Activated CD8-positive, alpha-beta T cell treated with anti-CD3 and anti-CD28 coated beads for 36 hours (primary cell): ENCODE measurements at regions of chr13 and their contacts with region 1.

Region 1: GRCh38 chr13:91722267-91722884 is 324.0 kb downstream of the GPC5 start:
- DNase-seq: no peak
- ATAC-seq: no peak
- H3K4me3 Mint-ChIP-seq: no peak overlapping the region
- H3K27ac Mint-ChIP-seq: no peak overlapping the region
- H3K4me1 Mint-ChIP-seq: no peaks in the 10 kb centered on the region
- H3K27me3 Mint-ChIP-seq: peaks cover 4% of the 10 kb centered on the region
- CTCF ChIP-seq: peak; percentile 72

Region 2: DNA sequence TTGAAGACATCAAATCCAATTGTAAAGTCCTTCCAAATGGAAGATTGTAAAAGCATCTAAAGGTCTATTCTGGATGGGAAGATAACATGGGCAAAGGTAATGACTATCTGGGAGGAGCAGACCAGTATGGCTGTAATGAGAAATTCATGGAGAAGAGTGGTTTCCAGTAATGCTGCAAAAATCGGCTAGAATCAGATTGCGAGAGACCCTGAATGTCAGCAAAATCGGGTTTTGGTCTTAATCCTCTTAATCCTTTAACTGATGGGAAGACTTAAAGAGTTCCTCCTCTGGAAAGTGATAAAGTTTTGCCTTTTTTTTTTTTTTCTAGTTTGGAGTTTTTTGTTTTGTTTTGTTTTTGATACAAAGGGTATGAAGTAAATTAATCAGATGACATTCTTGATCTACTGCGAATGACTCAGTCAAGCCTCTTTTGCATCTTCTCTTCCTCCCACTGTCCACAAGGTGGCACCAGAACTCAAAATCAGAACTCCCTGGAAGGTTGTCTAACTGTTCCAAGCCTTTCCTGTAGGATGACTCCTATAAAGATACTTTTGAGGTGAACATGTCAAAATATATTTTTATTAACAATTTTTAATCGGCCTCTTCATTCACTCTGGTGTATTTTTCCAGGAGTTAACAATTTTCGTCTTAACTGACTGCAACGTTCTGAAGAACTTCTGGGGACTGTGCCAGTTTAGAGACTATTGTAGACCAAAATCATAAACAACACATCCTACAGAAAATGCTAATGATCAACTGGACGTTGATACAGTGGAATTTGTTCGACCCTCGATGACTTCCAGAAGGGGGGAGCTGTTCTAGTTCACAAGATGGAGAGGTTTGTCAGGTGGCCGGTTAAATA is 588.2 kb before region 1 on chr13:
- CTCF ChIA-PET with region 1: interaction called, 3 read pairs
- POLR2A ChIA-PET with region 1: no interaction called
- intact Hi-C with region 1: loop called (anchors 10 kb)
- DNase-seq: peak; percentile 43
- ATAC-seq: peak; percentile 74
- H3K4me3 Mint-ChIP-seq: no peak overlapping the region
- H3K27ac Mint-ChIP-seq: no peak overlapping the region
- H3K4me1 Mint-ChIP-seq: no peaks in the 10 kb centered on the region
- H3K27me3 Mint-ChIP-seq: no peaks in the 10 kb centered on the region
- CTCF ChIP-seq: peak; percentile 76

Region 3: GRCh38 chr13:91375116-91375729 is 347.2 kb before region 1 on chr13:
- CTCF ChIA-PET with region 1: interaction called, 12 read pairs
- POLR2A ChIA-PET with region 1: no interaction called
- intact Hi-C with region 1: loop called (anchors 5 kb)
- DNase-seq: no peak
- ATAC-seq: peak; percentile 87
- H3K4me3 Mint-ChIP-seq: no peak overlapping the region
- H3K27ac Mint-ChIP-seq: no peak overlapping the region
- H3K4me1 Mint-ChIP-seq: peaks cover 6% of the 10 kb centered on the region
- H3K27me3 Mint-ChIP-seq: no peaks in the 10 kb centered on the region
- CTCF ChIP-seq: peak; percentile 60

Region 4: GRCh38 chr13:91381371-91381770 is 341.0 kb before region 1 on chr13:
- CTCF ChIA-PET with region 1: interaction called, 12 read pairs
- POLR2A ChIA-PET with region 1: no interaction called
- intact Hi-C with region 1: loop called (anchors 5 kb)
- DNase-seq: no peak
- ATAC-seq: no peak
- H3K4me3 Mint-ChIP-seq: no peak overlapping the region
- H3K27ac Mint-ChIP-seq: no peak overlapping the region
- H3K4me1 Mint-ChIP-seq: peaks cover 6% of the 10 kb centered on the region
- H3K27me3 Mint-ChIP-seq: peaks cover 15% of the 10 kb centered on the region
- CTCF ChIP-seq: no peak

Region 5: DNA sequence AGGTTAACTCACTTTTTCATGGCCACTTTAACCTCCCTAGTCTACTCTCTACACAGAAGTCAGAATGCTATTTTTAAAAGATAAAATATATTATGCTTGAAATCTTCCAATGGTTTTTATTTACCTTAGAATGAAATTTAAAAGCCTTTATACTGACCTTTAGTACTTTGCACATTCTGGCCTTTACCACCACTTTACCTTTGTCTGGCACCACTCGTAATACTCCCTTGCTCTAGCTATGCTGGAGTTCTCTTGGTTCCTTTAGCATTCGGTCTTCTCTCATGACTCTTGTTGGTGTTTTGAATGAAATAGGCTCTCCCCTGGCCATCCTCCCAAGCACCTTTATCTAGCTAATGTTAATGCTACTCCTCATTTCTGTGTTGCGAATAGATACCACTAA is 13.2 kb before region 1 on chr13:
- CTCF ChIA-PET with region 1: interaction called, 12 read pairs
- POLR2A ChIA-PET with region 1: no interaction called
- intact Hi-C with region 1: no loop called
- DNase-seq: no peak
- ATAC-seq: no peak
- H3K4me3 Mint-ChIP-seq: no peak overlapping the region
- H3K27ac Mint-ChIP-seq: no peak overlapping the region
- H3K4me1 Mint-ChIP-seq: no peaks in the 10 kb centered on the region
- H3K27me3 Mint-ChIP-seq: no peaks in the 10 kb centered on the region
- CTCF ChIP-seq: no peak